CD4-positive, alpha-beta memory T cell (primary cell): ENCODE measurements at regions of chr12 and their contacts with region 1.

Region 1: GRCh38 chr12:47397664-47398281 is 308.1 kb downstream of the RPAP3 start:
- DNase-seq: peak; percentile 60 to 66 (median 65)
- H3K4me3 ChIP-seq: peak overlapping the region in 1 of 2 donors; percentile 14
- H3K4me3 Mint-ChIP-seq: peak overlapping the region in 7 of 8 donors; percentile 58 to 79 (median 69)
- H3K27ac ChIP-seq: peak overlapping the region; percentile 35
- H3K27ac Mint-ChIP-seq: peak overlapping the region; percentile 75 to 94 (median 90)
- H3K4me1 ChIP-seq: peaks cover 52% of the 10 kb centered on the region
- H3K4me1 Mint-ChIP-seq: peaks cover 39 to 50% (median 44%) of the 10 kb centered on the region in 4 donors
- H3K27me3 ChIP-seq: no peaks in the 10 kb centered on the region
- H3K27me3 Mint-ChIP-seq: no peaks in the 10 kb centered on the region

Region 2: GRCh38 chr12:47032644-47033043 is 365.1 kb before region 1 on chr12:
- CTCF ChIA-PET with region 1: interaction called, 199 read pairs
- POLR2A ChIA-PET with region 1: interaction called, 15 read pairs
- intact Hi-C with region 1: loop called (anchors 1 kb)
- DNase-seq: peak; percentile 33 to 65 (median 56)
- H3K4me3 ChIP-seq: no peak overlapping the region
- H3K4me3 Mint-ChIP-seq: no peak overlapping the region
- H3K27ac ChIP-seq: no peak overlapping the region
- H3K27ac Mint-ChIP-seq: peak overlapping the region in 1 of 7 donors; percentile 1
- H3K4me1 ChIP-seq: peaks cover 10% of the 10 kb centered on the region
- H3K4me1 Mint-ChIP-seq: peaks cover 8 to 16% (median 10%) of the 10 kb centered on the region in 4 donors
- H3K27me3 ChIP-seq: no peaks in the 10 kb centered on the region
- H3K27me3 Mint-ChIP-seq: no peaks in the 10 kb centered on the region

Region 3: DNA sequence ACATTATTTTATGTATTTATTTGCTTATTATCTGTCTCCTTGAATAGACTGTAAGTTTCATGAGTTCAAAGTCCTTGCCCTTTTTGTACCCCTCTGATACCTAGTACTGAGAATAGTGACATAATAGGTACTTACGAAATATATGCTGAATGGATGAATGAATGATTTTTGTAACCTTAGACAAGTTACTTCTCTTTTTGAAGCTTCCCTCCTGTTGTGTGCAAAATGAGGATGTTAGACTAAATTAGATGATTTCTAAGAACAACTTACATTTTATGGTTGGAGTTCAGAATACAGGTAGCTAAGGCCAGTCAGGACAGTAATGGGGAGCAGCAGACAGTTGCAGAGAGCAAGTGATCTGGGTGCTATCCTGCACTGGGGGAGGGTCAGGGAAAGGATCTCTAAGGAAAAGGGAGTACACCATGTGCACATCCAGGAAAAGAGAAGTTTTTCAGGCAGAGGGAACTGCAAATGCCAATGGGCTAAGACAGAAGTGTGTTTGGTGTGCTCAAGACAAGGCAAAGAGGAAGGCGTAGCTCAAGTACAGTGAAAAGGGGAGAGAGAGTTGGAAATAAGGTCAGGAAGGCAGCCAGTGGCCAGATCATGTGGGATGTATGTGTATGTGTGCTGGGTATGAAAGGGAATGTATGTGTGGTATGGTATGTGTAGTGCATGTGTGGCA is 258.6 kb before region 1 on chr12:
- CTCF ChIA-PET with region 1: interaction called, 14 read pairs
- POLR2A ChIA-PET with region 1: no interaction called
- intact Hi-C with region 1: no loop called
- DNase-seq: no peak
- H3K4me3 ChIP-seq: no peak overlapping the region
- H3K4me3 Mint-ChIP-seq: no peak overlapping the region
- H3K27ac ChIP-seq: no peak overlapping the region
- H3K27ac Mint-ChIP-seq: peak overlapping the region in 3 of 7 donors; percentile 7 to 19 (median 11)
- H3K4me1 ChIP-seq: no peaks in the 10 kb centered on the region
- H3K4me1 Mint-ChIP-seq: peaks cover 7 to 13% (median 9%) of the 10 kb centered on the region in 4 donors
- H3K27me3 ChIP-seq: no peaks in the 10 kb centered on the region
- H3K27me3 Mint-ChIP-seq: no peaks in the 10 kb centered on the region

Region 4: GRCh38 chr12:47216150-47216677 is 181.6 kb before region 1 on chr12:
- CTCF ChIA-PET with region 1: interaction called, 66 read pairs
- POLR2A ChIA-PET with region 1: interaction called, 75 read pairs
- intact Hi-C with region 1: loop called (anchors 2 kb)
- DNase-seq: peak; percentile 71 to 87 (median 78)
- H3K4me3 ChIP-seq: peak overlapping the region; percentile 70 to 73
- H3K4me3 Mint-ChIP-seq: peak overlapping the region; percentile 92 to 99 (median 96)
- H3K27ac ChIP-seq: peak overlapping the region; percentile 65
- H3K27ac Mint-ChIP-seq: peak overlapping the region; percentile 92 to 97 (median 94)
- H3K4me1 ChIP-seq: peaks cover 32% of the 10 kb centered on the region
- H3K4me1 Mint-ChIP-seq: peaks cover 14 to 73% (median 27%) of the 10 kb centered on the region in 4 donors
- H3K27me3 ChIP-seq: no peaks in the 10 kb centered on the region
- H3K27me3 Mint-ChIP-seq: no peaks in the 10 kb centered on the region

Region 5: DNA sequence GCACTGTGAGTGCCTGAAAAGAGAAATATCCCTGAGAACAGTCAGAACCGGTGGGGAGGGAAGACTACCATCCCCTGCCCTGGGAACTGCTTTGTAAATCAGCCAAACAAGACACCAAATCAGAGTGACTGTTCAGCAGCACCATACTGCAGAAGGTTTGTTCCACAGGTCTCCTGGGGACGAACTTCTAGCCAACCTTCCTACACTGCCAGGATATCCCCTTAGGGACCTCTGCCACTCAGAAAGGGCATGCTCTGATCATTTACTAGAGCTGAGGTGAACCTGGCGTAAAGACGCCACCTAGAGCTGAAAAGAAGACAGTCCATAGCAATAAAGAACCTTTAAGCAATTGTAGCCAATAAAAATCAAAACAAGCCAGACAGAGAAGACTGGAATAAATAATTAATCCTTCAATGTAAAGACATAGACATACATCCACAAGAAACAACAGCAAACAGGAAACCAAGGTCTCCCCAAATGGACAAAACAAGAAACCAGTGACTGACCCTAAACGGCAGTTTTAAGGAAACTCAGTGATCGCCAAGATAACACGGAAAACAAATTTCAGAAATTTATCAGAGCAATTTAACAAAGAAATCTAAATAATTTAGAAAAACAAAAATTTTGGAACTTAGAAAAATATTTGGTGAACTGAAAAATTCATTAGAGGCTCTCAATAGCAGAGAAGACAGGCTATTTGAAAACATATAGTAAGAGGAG is 89.9 kb before region 1 on chr12:
- CTCF ChIA-PET with region 1: interaction called, 51 read pairs
- POLR2A ChIA-PET with region 1: interaction called, 53 read pairs
- intact Hi-C with region 1: loop called (anchors 1 kb)
- DNase-seq: peak; percentile 64 to 72 (median 66)
- H3K4me3 ChIP-seq: peak overlapping the region; percentile 78 to 82
- H3K4me3 Mint-ChIP-seq: peak overlapping the region; percentile 89 to 99 (median 94)
- H3K27ac ChIP-seq: peak overlapping the region; percentile 51
- H3K27ac Mint-ChIP-seq: peak overlapping the region; percentile 82 to 95 (median 93)
- H3K4me1 ChIP-seq: peaks cover 13% of the 10 kb centered on the region
- H3K4me1 Mint-ChIP-seq: peaks cover 21 to 43% (median 32%) of the 10 kb centered on the region in 4 donors
- H3K27me3 ChIP-seq: no peaks in the 10 kb centered on the region
- H3K27me3 Mint-ChIP-seq: no peaks in the 10 kb centered on the region

Region 6: DNA sequence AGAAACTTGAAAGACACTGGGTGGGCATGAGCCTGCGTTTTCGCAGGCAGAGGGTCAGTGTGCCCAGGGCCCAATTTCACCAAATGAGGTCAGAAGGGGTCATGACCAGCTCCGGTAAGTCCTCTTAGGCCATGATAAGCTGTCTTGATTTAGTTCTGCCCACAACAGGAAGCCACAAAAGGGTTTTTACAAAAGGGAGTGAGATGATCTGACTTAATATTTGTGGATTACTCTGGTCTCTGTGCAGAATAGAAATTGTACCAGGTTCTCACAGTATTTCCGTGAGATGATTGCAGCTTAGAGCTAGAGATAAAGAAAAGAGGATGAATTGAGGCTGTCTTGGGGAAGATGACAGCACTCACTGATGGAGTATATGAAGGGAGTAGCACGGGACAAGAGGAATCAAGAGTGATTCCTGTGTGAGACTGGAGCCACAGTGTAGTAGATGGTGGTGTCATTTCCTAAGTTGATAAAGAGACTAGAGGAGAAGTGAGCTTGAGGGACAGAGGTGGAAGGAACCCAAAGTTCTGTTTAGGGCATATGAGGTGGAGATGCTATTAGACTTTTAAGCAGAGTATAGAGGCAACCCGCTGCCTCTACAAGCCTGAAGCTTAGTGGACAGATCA is 29.7 kb before region 1 on chr12:
- CTCF ChIA-PET with region 1: interaction called, 54 read pairs
- POLR2A ChIA-PET with region 1: interaction called, 21 read pairs
- intact Hi-C with region 1: no loop called
- DNase-seq: no peak
- H3K4me3 ChIP-seq: no peak overlapping the region
- H3K4me3 Mint-ChIP-seq: no peak overlapping the region
- H3K27ac ChIP-seq: no peak overlapping the region
- H3K27ac Mint-ChIP-seq: no peak overlapping the region
- H3K4me1 ChIP-seq: peaks cover 63% of the 10 kb centered on the region
- H3K4me1 Mint-ChIP-seq: peaks cover under 1 to 28% (median 10%) of the 10 kb centered on the region in 4 donors
- H3K27me3 ChIP-seq: no peaks in the 10 kb centered on the region
- H3K27me3 Mint-ChIP-seq: no peaks in the 10 kb centered on the region